ENCODE measurements at regions of chr19 and their contacts with region 1.

Region 1: GRCh38 chr19:17947815-17948513 is 15.1 kb downstream of the CCDC124 start:
- DNase-seq: peak; percentile 98
- ATAC-seq: peak; percentile 61
- H3K4me3 Mint-ChIP-seq: peak overlapping the region; percentile 70
- H3K27ac Mint-ChIP-seq: no peak overlapping the region
- H3K4me1 Mint-ChIP-seq: peaks cover 50% of the 10 kb centered on the region
- H3K27me3 Mint-ChIP-seq: peaks cover 33% of the 10 kb centered on the region

Region 2: DNA sequence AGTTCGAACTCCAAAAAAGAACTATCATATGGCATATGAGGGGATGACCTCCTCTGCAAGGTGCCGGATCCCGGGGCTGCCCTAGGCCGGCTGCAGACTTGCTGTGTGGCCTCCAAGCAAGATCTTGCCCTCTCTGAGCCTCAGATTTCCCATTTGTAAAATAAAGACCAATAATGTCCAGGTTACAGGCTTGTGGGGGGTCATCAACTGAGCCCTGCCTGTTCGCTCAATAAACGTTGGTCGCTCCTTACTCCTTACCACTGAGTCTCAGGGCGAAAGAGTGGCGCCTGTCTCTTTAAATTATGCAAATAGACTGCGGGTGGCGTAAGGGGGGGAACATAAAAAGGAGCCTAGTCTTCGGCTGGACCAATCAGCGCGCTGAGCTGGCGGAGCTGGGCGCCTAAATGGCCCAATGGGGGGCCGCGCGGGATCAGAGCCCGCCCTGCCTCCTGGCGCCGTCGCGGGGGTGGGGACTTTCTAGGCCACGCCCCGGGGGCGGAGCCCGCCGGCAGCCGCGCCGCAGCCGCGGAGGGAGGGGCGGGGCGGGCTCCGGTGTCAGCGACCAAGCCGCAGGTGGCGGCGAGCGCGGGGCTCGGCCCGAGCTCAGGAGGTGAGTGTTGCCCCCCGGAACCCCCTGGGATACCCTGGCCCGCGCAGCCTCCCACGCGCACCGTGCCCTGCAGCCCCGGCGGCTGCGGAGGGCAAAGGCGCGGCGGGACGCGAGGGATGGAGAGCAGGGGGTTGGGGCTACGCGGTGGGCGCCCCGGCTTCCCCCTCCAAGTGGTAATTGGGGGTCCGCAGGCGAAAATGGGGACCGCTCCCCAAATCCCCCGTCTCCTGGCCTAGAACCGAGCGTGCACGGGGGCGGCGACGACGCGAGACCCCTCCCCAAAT is 200.5 kb before region 1 on chr19:
- CTCF ChIA-PET with region 1: no interaction called
- POLR2A ChIA-PET with region 1: no interaction called
- intact Hi-C with region 1: loop called in 1 of 2 experiments (anchors 2 kb)
- DNase-seq: peak; percentile 98
- ATAC-seq: peak; percentile 90
- H3K4me3 Mint-ChIP-seq: peak overlapping the region; percentile 76
- H3K27ac Mint-ChIP-seq: peak overlapping the region; percentile 60
- H3K4me1 Mint-ChIP-seq: peaks cover 42% of the 10 kb centered on the region
- H3K27me3 Mint-ChIP-seq: no peaks in the 10 kb centered on the region

Region 3: GRCh38 chr19:17932485-17933338 is 15.3 kb before region 1 on chr19 and contains the start of gene CCDC124:
- CTCF ChIA-PET with region 1: interaction called, 14 read pairs
- POLR2A ChIA-PET with region 1: interaction called, 4 read pairs
- intact Hi-C with region 1: loop called in 1 of 2 experiments (anchors 1 kb)
- DNase-seq: peak; percentile 96
- ATAC-seq: peak; percentile 98
- H3K4me3 Mint-ChIP-seq: peak within 1 kb of the TSS; percentile 88
- H3K27ac Mint-ChIP-seq: peak within 1 kb of the TSS; percentile 92
- H3K4me1 Mint-ChIP-seq: peaks cover 18% of the 10 kb centered on the region
- H3K27me3 Mint-ChIP-seq: no peaks in the 10 kb centered on the region
- total RNA-seq, gene CCDC124: 99.3 to 131 TPM

Region 4: GRCh38 chr19:18044825-18045304 is 96.9 kb after region 1 on chr19:
- CTCF ChIA-PET with region 1: interaction called, 4 read pairs
- POLR2A ChIA-PET with region 1: no interaction called
- intact Hi-C with region 1: loop called in 1 of 2 experiments (anchors 1 kb)
- DNase-seq: peak; percentile 96
- ATAC-seq: peak; percentile 94
- H3K4me3 Mint-ChIP-seq: peak overlapping the region; percentile 11
- H3K27ac Mint-ChIP-seq: peak overlapping the region; percentile 16
- H3K4me1 Mint-ChIP-seq: peaks cover 34% of the 10 kb centered on the region
- H3K27me3 Mint-ChIP-seq: peaks cover 9% of the 10 kb centered on the region

Region 5: GRCh38 chr19:18091217-18091608 is 143.2 kb after region 1 on chr19:
- CTCF ChIA-PET with region 1: no interaction called
- POLR2A ChIA-PET with region 1: no interaction called
- intact Hi-C with region 1: loop called in 1 of 2 experiments (anchors 2 kb)
- DNase-seq: peak; percentile 92
- ATAC-seq: peak; percentile 73
- H3K4me3 Mint-ChIP-seq: peak overlapping the region; percentile 57
- H3K27ac Mint-ChIP-seq: peak overlapping the region; percentile 99
- H3K4me1 Mint-ChIP-seq: peaks cover 63% of the 10 kb centered on the region
- H3K27me3 Mint-ChIP-seq: no peaks in the 10 kb centered on the region

Region 6: GRCh38 chr19:18173572-18174288 is 225.8 kb after region 1 on chr19 and contains the start of gene IFI30:
- CTCF ChIA-PET with region 1: no interaction called
- POLR2A ChIA-PET with region 1: no interaction called
- intact Hi-C with region 1: loop called in 1 of 2 experiments (anchors 5 kb)
- DNase-seq: peak; percentile 80
- ATAC-seq: peak; percentile 86
- H3K4me3 Mint-ChIP-seq: peak within 1 kb of the TSS; percentile 80
- H3K27ac Mint-ChIP-seq: peak within 1 kb of the TSS; percentile 65
- H3K4me1 Mint-ChIP-seq: peaks cover 15% of the 10 kb centered on the region
- H3K27me3 Mint-ChIP-seq: no peaks in the 10 kb centered on the region
- total RNA-seq, gene IFI30: 20.4 to 29.5 TPM

Region 7: DNA sequence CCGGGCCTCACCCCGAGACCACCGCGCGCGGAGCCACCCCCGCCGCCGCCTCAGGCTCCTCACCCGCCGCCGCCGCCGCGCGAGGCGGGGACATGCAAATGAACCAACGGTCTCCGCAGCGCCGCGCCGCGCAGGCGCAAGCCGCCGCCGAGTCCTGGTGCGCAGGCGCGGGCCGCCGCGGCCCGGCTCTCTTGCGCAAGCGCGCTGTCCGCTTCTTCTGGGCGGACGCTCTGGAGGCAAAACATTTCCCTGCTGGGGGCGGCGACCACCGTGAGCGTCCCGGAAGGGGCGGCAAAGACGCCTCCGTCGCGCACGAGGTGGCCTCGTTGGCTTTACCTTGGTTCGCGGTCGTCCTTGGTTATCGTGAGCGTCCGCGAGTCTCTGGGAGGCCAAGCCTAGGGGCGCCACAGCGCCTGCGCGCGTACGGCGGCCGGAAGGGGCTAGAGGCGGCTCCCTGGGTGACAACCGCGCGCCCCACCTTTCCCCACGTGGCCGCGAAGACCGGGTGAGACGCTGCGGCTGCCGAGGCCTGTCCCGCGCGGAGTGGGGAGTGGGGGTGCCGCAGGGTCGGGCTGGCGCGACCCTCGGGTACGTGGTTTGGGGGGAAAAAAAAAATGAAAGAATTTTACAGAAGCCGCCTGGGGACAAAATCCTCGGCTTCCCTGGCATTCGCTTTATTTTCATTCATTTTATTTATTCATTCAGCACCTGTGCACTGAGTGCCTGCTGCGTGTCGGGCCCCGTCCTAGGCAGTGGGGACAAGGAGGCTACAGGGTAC is 1085.7 kb after region 1 on chr19 and contains the starts of genes ARMC6 and SUGP2:
- CTCF ChIA-PET with region 1: no interaction called
- POLR2A ChIA-PET with region 1: no interaction called
- intact Hi-C with region 1: loop called in 1 of 2 experiments (anchors 5 kb)
- DNase-seq: peak; percentile 92
- ATAC-seq: peak; percentile 78
- H3K4me3 Mint-ChIP-seq: peak within 1 kb of the TSS; percentile 98
- H3K27ac Mint-ChIP-seq: peak within 1 kb of the TSS; percentile 96
- H3K4me1 Mint-ChIP-seq: peaks cover 31% of the 10 kb centered on the region
- H3K27me3 Mint-ChIP-seq: no peaks in the 10 kb centered on the region
- total RNA-seq, gene ARMC6: 33.0 to 40.8 TPM
- total RNA-seq, gene SUGP2: 89.8 to 104 TPM

Measured in activated CD4-positive, alpha-beta T cell treated with anti-CD3 and anti-CD28 coated beads for 36 hours (primary cell).